Aorta (tissue), 5 donors: ENCODE measurements at regions of chr7 and their contacts with region 1.

Region 1: GRCh38 chr7:118129041-118129795 is 54.7 kb upstream of the LSM8 start:
- DNase-seq: no peak
- ATAC-seq: no peak
- H3K4me3 ChIP-seq: no peak overlapping the region
- H3K27ac ChIP-seq: no peak overlapping the region
- H3K4me1 ChIP-seq: no peaks in the 10 kb centered on the region
- H3K27me3 ChIP-seq: no peaks in the 10 kb centered on the region

Region 2: GRCh38 chr7:117659453-117660086 is 469.6 kb before region 1 on chr7:
- intact Hi-C with region 1: no loop called
- DNase-seq: no peak
- ATAC-seq: no peak
- H3K4me3 ChIP-seq: no peak overlapping the region
- H3K27ac ChIP-seq: no peak overlapping the region
- H3K4me1 ChIP-seq: no peaks in the 10 kb centered on the region
- H3K27me3 ChIP-seq: no peaks in the 10 kb centered on the region

Region 3: DNA sequence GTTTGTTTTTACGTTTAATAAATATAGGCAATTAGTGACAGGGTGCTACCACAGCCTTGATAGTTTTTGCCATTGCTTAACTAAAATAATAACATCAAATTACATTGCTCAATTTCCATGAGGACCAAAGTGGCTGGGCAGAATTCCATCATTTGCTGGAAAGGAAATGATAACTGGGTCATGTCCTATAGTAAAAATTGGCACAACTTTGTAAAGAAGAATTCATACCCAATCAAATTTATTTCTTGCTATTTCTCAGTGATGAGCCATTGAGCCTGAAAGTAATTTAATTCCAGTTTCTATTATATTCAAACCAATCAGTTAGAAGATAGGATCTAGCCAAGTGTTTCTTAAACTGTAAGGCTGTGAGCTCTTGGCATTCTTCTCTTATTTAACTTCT is 153.7 kb before region 1 on chr7:
- intact Hi-C with region 1: no loop called
- DNase-seq: no peak
- ATAC-seq: peak; percentile 20
- H3K4me3 ChIP-seq: no peak overlapping the region
- H3K27ac ChIP-seq: no peak overlapping the region
- H3K4me1 ChIP-seq: no peaks in the 10 kb centered on the region
- H3K27me3 ChIP-seq: no peaks in the 10 kb centered on the region

Region 4: DNA sequence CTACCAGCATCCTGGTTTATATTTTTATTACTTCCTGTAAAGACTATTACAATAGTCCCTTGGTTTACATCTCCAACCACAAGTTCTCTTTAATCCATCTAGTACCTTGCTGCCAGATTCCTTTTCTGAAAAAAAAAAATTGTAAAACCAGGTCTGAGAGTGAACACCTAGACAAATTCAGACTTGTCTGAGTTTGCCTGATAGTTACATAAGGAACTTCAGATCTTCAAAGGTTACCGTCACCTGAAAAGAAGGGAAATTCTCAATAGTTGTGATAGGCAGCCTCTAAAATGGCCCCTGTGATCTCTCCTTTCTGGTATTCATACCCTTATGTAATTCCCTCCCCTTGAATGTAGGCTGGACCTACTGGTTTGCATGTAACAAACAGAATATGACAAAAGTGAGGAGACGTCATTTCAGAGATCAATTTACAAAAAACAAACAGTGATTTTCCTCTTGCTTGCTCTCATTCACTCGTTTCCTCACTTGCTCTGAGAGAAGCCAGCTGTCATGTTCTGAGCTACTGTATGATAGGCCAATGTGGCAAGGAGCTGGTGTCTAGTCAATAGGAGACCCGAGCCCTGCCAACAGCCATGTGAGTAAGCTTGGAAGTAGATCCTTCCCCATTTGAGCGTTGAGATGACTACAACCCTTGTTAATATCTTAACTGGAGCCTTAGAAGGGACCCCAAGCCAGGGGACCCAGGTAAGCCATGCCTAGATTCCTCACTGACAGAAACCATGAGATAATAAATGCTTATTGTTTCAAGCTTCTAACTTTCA is 56.1 kb before region 1 on chr7:
- intact Hi-C with region 1: loop called in 1 of 2 experiments (anchors 5 kb)
- DNase-seq: no peak
- ATAC-seq: no peak
- H3K4me3 ChIP-seq: no peak overlapping the region
- H3K27ac ChIP-seq: no peak overlapping the region
- H3K4me1 ChIP-seq: no peaks in the 10 kb centered on the region
- H3K27me3 ChIP-seq: no peaks in the 10 kb centered on the region